Mammary epithelial cell (primary cell): ENCODE measurements at regions of chr12 and their contacts with region 1.

Region 1: GRCh38 chr12:27064397-27065342 is 17.7 kb downstream of the C12orf71 start:
- DNase-seq: no peak
- H3K4me3 ChIP-seq: no peak overlapping the region
- H3K27ac ChIP-seq: no peak overlapping the region
- H3K4me1 ChIP-seq: no peaks in the 10 kb centered on the region
- H3K27me3 ChIP-seq: no peaks in the 10 kb centered on the region
- CTCF ChIP-seq: no peak

Region 2: GRCh38 chr12:26953447-26953846 is 111.2 kb before region 1 on chr12:
- CTCF ChIA-PET with region 1: no interaction called
- dilution Hi-C with region 1: no loop called
- in situ Hi-C with region 1: no loop called
- intact Hi-C with region 1: no loop called
- DNase-seq: no peak
- H3K4me3 ChIP-seq: no peak overlapping the region
- H3K27ac ChIP-seq: no peak overlapping the region
- H3K4me1 ChIP-seq: no peaks in the 10 kb centered on the region
- H3K27me3 ChIP-seq: no peaks in the 10 kb centered on the region
- CTCF ChIP-seq: no peak

Region 3: GRCh38 chr12:26966842-26967241 is 97.8 kb before region 1 on chr12:
- CTCF ChIA-PET with region 1: no interaction called
- dilution Hi-C with region 1: no loop called
- in situ Hi-C with region 1: no loop called
- intact Hi-C with region 1: no loop called
- DNase-seq: no peak
- H3K4me3 ChIP-seq: no peak overlapping the region
- H3K27ac ChIP-seq: no peak overlapping the region
- H3K4me1 ChIP-seq: no peaks in the 10 kb centered on the region
- H3K27me3 ChIP-seq: no peaks in the 10 kb centered on the region
- CTCF ChIP-seq: no peak

Region 4: GRCh38 chr12:27133022-27133590 is 68.4 kb after region 1 on chr12:
- CTCF ChIA-PET with region 1: no interaction called
- dilution Hi-C with region 1: loop called (anchors 5 kb)
- in situ Hi-C with region 1: no loop called
- intact Hi-C with region 1: no loop called
- DNase-seq: no peak
- H3K4me3 ChIP-seq: no peak overlapping the region
- H3K27ac ChIP-seq: no peak overlapping the region
- H3K4me1 ChIP-seq: no peaks in the 10 kb centered on the region
- H3K27me3 ChIP-seq: no peaks in the 10 kb centered on the region
- CTCF ChIP-seq: no peak

Region 5: DNA sequence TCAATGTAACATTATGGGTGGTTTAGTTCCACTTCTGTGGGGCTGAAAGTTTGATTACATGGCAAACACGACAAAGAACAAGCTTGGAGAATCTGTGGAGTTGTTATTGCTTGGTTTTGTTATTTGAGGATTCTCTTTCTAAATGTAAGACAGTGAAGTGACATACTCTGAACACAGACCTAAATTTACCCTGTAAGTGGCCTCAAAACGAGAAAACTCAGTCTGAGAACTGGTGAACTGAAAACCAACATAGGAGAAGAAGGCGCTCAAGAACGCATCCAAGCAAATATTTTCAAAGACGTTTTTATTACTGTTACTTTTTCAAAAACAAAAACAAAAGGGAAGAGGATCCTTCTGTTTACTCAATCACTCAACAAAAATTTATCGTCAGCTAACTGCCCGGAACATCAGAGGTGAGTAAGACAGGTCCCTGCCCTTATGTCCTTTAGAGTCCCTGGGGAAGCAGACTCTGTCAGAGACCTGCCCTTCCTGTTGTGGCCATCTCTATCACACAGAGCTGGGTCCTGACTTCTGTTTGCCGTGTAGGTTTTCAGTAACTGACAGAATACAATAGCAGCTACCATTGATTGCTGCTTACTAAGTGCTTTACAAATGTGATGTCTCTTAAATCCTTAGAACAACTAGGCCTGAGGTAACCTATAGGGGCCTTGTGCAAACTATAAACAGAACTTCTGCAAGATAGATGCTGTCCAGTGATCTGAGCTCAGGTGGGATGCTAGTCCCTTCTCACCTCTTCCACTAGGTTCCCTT is 97.0 kb after region 1 on chr12:
- CTCF ChIA-PET with region 1: no interaction called
- dilution Hi-C with region 1: no loop called
- in situ Hi-C with region 1: no loop called
- intact Hi-C with region 1: no loop called
- DNase-seq: no peak
- H3K4me3 ChIP-seq: no peak overlapping the region
- H3K27ac ChIP-seq: no peak overlapping the region
- H3K4me1 ChIP-seq: peaks cover 10% of the 10 kb centered on the region
- H3K27me3 ChIP-seq: no peaks in the 10 kb centered on the region
- CTCF ChIP-seq: no peak

Region 6: DNA sequence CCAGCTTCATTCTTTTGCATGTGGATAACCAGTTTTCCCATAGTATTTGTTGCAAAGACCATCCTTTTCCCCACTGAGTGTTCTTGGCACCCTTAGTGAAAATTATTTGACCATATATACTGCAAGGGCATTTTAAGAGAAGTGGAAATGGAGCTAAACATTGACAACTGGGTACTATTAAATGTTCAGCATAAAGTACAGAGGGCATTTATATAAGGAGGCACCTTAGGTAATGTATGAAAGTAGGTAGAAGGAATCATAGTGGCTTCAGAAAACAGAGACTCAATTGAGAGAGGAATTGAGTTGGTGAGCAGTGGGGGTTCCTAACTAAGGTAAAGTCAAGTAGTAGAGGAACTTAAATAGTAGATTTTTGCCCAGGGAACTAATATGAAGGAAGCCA is 347.4 kb after region 1 on chr12:
- CTCF ChIA-PET with region 1: no interaction called
- dilution Hi-C with region 1: no loop called
- in situ Hi-C with region 1: no loop called
- intact Hi-C with region 1: no loop called
- DNase-seq: no peak
- H3K4me3 ChIP-seq: no peak overlapping the region
- H3K27ac ChIP-seq: no peak overlapping the region
- H3K4me1 ChIP-seq: no peaks in the 10 kb centered on the region
- H3K27me3 ChIP-seq: no peaks in the 10 kb centered on the region
- CTCF ChIP-seq: no peak